AG04449 (cell line): ENCODE measurements at regions of chr22 and their contacts with region 1.

Region 1: GRCh38 chr22:43993027-43993760 is 30.9 kb upstream of the PARVB start:
- DNase-seq: no peak
- H3K4me3 ChIP-seq: no peak overlapping the region
- CTCF ChIP-seq: peak; percentile 93

Region 2: GRCh38 chr22:44014241-44014640 is 21.0 kb after region 1 on chr22:
- CTCF ChIA-PET with region 1: interaction called, 95 read pairs
- POLR2A ChIA-PET with region 1: no interaction called
- DNase-seq: no peak
- H3K4me3 ChIP-seq: no peak overlapping the region
- CTCF ChIP-seq: no peak

Region 3: GRCh38 chr22:44075670-44076069 is 82.5 kb after region 1 on chr22:
- CTCF ChIA-PET with region 1: interaction called, 226 read pairs
- POLR2A ChIA-PET with region 1: no interaction called
- DNase-seq: no peak
- H3K4me3 ChIP-seq: no peak overlapping the region
- CTCF ChIP-seq: no peak

Region 4: DNA sequence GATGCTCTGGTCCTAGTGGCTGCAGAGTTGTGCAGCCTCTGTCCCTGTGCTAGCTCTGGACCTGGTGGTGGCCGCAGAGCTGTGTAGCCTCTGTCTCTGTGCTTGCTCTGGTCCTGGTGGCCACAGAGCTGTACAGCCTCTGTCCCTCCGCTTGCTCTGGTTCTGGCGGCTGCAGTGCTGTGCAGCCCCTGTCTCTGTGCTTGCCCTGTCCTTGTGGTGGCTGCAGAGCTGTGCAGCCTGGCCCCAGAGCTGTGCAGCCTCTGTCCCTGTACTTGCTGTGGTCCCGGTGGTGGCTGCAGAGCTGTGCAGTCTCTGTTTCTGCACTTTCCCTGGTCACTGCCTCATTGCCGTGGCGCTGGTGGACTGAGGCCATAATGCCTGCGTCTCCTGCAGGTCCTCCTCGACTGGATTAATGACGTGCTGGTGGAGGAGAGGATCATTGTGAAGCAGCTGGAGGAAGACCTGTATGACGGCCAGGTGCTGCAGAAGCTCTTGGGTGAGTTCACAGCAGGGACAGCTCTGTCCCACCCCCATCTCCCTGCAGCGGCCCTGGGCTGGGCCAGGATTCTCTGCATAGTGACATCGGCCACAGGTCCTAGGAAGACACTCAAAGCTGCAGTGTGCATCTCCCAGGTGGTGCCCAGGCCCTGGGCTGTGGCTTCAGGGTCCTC is 125.6 kb after region 1 on chr22:
- CTCF ChIA-PET with region 1: no interaction called
- POLR2A ChIA-PET with region 1: no interaction called
- DNase-seq: no peak
- H3K4me3 ChIP-seq: no peak overlapping the region
- CTCF ChIP-seq: no peak

Region 5: DNA sequence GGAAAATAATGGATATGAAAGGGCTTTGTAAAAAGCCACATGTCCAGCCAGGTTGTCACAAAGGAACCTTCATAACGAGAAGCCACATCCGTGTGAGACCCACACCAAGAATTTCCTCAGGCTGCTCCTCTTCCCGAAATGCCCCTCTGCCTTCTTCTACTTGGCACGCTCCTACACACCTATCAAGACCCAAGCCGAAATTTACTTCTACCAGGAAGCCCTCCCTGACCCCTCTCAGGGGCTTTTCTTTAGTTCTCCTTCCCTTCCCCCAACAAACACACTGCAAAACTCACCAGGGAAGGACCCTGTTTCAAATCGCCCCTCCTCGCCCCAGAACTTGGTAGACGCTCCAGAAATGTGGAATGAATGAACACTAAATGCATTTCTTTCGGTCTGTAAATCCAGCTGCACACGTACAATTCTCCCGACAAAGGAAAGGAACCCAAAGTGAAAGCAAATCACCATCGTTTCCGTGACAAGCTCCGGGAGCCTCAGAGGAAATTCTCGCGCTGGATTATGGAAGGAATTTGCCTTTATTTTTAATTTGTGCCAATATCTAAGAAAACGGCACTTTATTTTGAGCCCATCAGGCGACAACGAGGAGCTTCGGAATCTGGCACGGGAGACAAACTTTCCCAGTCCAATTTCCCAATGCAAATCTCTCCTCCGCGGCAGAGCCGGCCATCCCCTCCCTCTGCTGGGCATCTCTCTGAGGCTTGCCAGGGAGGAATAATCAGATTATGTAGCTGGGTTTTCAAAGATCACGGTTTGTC is 332.7 kb after region 1 on chr22:
- CTCF ChIA-PET with region 1: interaction called, 16 read pairs
- POLR2A ChIA-PET with region 1: no interaction called
- DNase-seq: no peak
- H3K4me3 ChIP-seq: peak overlapping the region; percentile 66
- CTCF ChIP-seq: peak; percentile 40

Region 6: DNA sequence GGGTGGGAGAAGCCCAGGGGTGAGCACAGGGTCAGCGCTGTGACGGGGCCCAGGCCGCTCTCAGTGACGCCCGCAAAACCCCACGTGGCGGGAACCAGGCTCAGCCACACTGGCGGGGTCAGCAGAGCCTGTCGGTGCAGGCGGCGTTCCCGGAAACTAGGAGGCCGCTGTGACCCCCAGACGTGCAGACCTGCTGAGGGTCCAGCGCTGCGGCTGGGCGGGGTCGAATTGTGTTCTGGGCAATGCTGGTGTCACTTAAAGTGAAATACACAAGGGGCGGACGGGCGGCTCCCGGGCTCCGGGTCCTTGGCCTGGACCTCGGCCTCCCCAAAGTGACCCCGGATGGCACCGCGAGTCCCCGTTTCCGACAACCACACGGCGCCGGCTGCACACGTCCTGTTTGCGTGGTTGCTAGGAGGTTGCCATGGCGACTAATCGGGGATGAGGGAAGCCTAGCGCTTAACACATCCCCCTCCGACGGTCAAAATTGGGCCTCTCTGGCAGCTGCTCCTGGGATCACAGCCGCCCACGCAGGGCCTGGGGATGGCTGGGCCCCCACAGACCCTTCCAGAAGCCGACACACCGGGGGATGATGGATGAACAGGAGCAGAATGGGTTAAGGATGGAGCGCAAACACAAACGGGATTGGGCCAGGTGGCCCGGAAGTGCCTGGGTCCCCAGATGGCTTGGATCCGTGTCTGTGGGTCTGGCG is 627.1 kb after region 1 on chr22:
- CTCF ChIA-PET with region 1: interaction called, 319 read pairs
- POLR2A ChIA-PET with region 1: no interaction called
- DNase-seq: no peak
- H3K4me3 ChIP-seq: no peak overlapping the region
- CTCF ChIP-seq: no peak